Vagina (tissue), 2 donors: ENCODE measurements at regions of chr4 and their contacts with region 1.

Region 1: GRCh38 chr4:34733185-34733941 is 1511.0 kb downstream of the ARAP2 start:
- DNase-seq: no peak
- H3K4me3 ChIP-seq: no peak overlapping the region
- H3K27ac ChIP-seq: no peak overlapping the region
- H3K4me1 ChIP-seq: no peaks in the 10 kb centered on the region
- H3K27me3 ChIP-seq: no peaks in the 10 kb centered on the region
- CTCF ChIP-seq: no peak
- POLR2A ChIP-seq: no peak

Region 2: DNA sequence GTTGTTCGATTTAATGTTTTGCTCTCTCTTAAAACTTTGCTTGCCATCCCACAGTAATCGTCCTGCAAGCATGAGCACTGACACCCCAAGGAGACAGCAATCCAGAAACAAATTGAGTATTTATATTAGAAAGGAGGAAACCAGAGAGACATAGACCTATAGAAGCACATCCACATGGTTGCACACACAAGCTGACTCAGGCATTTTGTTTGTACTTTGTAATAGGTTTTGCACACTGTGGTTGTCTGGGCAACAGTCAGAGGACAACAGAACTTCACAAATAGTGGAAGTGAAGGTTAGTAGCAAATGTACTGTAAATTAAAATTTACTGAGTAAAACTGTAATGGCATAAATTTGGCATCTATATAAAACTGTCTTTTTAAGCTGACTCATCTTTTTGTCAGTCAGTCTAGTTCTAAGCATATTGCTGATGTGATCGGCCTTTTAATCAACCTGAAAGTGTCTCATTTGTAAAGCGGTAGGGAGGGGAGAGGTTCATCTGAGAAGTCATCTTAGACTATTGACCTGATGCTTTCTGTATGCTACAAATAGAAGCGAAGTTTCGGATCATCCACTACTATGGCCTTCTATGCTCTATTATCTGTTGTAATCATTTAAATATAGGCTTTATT is 113.7 kb before region 1 on chr4:
- intact Hi-C with region 1: loop called (anchors 2 kb)
- DNase-seq: no peak
- H3K4me3 ChIP-seq: no peak overlapping the region
- H3K27ac ChIP-seq: no peak overlapping the region
- H3K4me1 ChIP-seq: no peaks in the 10 kb centered on the region
- H3K27me3 ChIP-seq: no peaks in the 10 kb centered on the region
- CTCF ChIP-seq: no peak
- POLR2A ChIP-seq: no peak

Region 3: GRCh38 chr4:34718576-34719245 is 14.7 kb before region 1 on chr4:
- intact Hi-C with region 1: no loop called
- DNase-seq: no peak
- H3K4me3 ChIP-seq: no peak overlapping the region
- H3K27ac ChIP-seq: no peak overlapping the region
- H3K4me1 ChIP-seq: no peaks in the 10 kb centered on the region
- H3K27me3 ChIP-seq: no peaks in the 10 kb centered on the region
- CTCF ChIP-seq: no peak
- POLR2A ChIP-seq: no peak